BJ (cell line): ENCODE measurements at regions of chr11 and their contacts with region 1.

Region 1: GRCh38 chr11:72040726-72041441 is 39.5 kb downstream of the NUMA1 start:
- DNase-seq: peak; percentile 66
- H3K4me3 ChIP-seq: peak overlapping the region; percentile 75
- H3K27me3 ChIP-seq: no peaks in the 10 kb centered on the region
- CTCF ChIP-seq: no peak

Region 2: GRCh38 chr11:72058416-72059034 is 17.6 kb after region 1 on chr11:
- CTCF ChIA-PET with region 1: interaction called, 7 read pairs
- POLR2A ChIA-PET with region 1: interaction called, 14 read pairs
- DNase-seq: no peak
- H3K4me3 ChIP-seq: no peak overlapping the region
- H3K27me3 ChIP-seq: no peaks in the 10 kb centered on the region
- CTCF ChIP-seq: no peak

Region 3: GRCh38 chr11:72069787-72070251 is 28.9 kb after region 1 on chr11:
- CTCF ChIA-PET with region 1: interaction called, 10 read pairs
- POLR2A ChIA-PET with region 1: interaction called, 6 read pairs
- DNase-seq: peak; percentile 67
- H3K4me3 ChIP-seq: no peak overlapping the region
- H3K27me3 ChIP-seq: no peaks in the 10 kb centered on the region
- CTCF ChIP-seq: no peak